T-cell (primary cell): ENCODE measurements at regions of chr3 and their contacts with region 1.

Region 1: DNA sequence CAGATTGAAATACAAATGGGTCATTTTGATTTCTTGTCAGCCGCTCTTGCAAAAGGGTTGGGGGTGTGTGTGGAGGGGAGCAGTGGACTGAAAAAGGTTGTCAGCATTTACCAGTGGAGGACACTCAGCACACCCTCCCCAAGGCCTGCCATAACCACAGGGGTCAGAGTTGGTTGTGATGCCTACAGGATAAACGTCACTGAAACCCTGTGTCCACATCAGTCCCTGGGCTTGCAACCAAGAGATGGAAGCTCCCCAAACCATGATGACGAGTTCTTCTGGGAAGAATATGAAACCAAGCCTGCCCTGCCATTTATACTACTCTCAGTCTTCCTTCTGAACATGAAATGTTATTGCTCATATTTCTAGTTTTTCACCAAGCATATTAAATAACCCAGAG is 54.0 kb upstream of the UMPS start:
- DNase-seq: no peak
- ATAC-seq: no peak
- H3K4me3 ChIP-seq: no peak overlapping the region
- H3K4me3 Mint-ChIP-seq: no peak overlapping the region
- H3K27ac ChIP-seq: no peak overlapping the region
- H3K27ac Mint-ChIP-seq: no peak overlapping the region
- H3K4me1 ChIP-seq: peaks cover 0 to 6% of the 10 kb centered on the region in 2 experiments
- H3K4me1 Mint-ChIP-seq: peaks cover 6 to 7% (median 6%) of the 10 kb centered on the region in 3 donors
- H3K27me3 ChIP-seq: peaks cover 0 to 3% of the 10 kb centered on the region in 2 experiments
- H3K27me3 Mint-ChIP-seq: peaks cover 0 to 2% of the 10 kb centered on the region in 2 donors

Region 2: DNA sequence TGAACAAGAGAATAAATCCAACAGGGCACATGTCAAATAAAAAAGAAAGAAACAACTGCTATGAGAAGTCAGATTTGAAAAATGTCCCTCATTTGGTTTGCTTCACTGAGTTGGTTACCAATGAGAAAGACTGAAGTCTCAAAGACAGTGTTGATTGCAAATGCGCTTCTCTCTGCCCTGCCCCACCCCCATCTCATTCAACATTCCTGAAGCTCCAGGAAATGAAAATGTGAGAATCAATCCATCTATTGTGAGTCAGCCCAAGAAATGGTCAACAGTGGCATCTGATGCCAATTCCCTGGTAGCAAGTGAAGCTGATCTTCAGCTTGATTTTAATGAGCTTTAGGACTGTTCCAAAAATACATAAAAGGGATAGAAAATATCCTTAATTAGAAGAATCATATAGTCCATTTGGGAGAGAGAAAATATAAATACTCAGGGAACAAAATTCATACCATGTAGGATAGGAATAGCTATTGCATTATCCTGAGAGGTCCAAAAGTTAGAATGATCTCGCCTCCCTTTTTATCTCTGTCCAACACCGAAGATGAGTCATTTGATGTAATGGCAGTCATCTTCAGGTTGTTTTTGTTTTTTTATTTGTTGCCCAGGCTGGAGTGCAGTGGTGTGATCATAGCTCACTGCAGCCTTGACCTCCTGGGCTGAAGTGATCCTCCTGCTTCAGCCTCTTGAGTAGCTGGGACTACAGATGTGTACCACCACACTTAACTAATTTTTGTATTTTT is 146.2 kb before region 1 on chr3:
- CTCF ChIA-PET with region 1: no interaction called
- POLR2A ChIA-PET with region 1: no interaction called
- DNase-seq: no peak
- ATAC-seq: no peak
- H3K4me3 ChIP-seq: no peak overlapping the region
- H3K4me3 Mint-ChIP-seq: no peak overlapping the region
- H3K27ac ChIP-seq: no peak overlapping the region
- H3K27ac Mint-ChIP-seq: no peak overlapping the region
- H3K4me1 ChIP-seq: no peaks in the 10 kb centered on the region
- H3K4me1 Mint-ChIP-seq: no peaks in the 10 kb centered on the region
- H3K27me3 ChIP-seq: peaks cover 2 to 4% of the 10 kb centered on the region in 2 experiments
- H3K27me3 Mint-ChIP-seq: peaks cover 19 to 29% of the 10 kb centered on the region in 2 donors

Region 3: GRCh38 chr3:124620600-124621063 is 55.6 kb before region 1 on chr3:
- CTCF ChIA-PET with region 1: no interaction called
- POLR2A ChIA-PET with region 1: interaction called in 1 of 2 experiments, 10 read pairs
- DNase-seq: peak in 14 of 35 experiments; percentile 1 to 37 (median 8)
- ATAC-seq: peak in 3 of 4 experiments; percentile 83 to 97 (median 96)
- H3K4me3 ChIP-seq: no peak overlapping the region
- H3K4me3 Mint-ChIP-seq: peak overlapping the region; percentile 41 to 44 (median 41)
- H3K27ac ChIP-seq: peak overlapping the region; percentile 21
- H3K27ac Mint-ChIP-seq: peak overlapping the region; percentile 83 to 90
- H3K4me1 ChIP-seq: peaks cover 4 to 11% of the 10 kb centered on the region in 2 experiments
- H3K4me1 Mint-ChIP-seq: peaks cover 13 to 33% (median 21%) of the 10 kb centered on the region in 3 donors
- H3K27me3 ChIP-seq: peaks cover 0 to 2% of the 10 kb centered on the region in 2 experiments
- H3K27me3 Mint-ChIP-seq: no peaks in the 10 kb centered on the region